ENCODE measurements at regions of chr1 and their contacts with region 1.

Region 1: DNA sequence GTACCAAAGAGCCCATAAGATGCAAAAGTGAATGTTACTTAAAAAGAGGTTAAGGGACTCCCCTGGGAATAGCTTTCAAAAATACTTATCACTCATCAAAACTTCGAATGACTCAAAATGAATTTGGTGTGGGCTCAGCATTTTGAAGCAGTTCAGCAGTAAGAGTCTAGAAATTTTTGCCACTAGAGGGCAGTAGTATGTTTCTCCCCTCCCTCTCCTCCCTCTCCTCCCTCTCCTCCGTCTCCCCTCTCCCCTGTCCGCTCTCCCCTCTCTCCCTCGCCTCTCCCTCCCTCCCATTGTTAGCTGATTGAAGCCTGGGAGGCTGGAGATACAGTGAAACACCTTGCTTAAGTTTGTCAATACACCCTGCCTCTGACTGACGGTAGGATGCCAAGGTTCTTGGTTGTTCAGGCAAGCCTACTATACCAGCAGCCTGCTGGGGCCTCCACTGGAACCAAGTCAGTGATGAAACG is 70.8 kb upstream of the TENT5C start:
- DNase-seq: peak; percentile 25
- H3K4me3 Mint-ChIP-seq: no peak overlapping the region
- H3K27ac Mint-ChIP-seq: no peak overlapping the region
- H3K4me1 Mint-ChIP-seq: peaks cover 12% of the 10 kb centered on the region
- H3K27me3 Mint-ChIP-seq: no peaks in the 10 kb centered on the region

Region 2: DNA sequence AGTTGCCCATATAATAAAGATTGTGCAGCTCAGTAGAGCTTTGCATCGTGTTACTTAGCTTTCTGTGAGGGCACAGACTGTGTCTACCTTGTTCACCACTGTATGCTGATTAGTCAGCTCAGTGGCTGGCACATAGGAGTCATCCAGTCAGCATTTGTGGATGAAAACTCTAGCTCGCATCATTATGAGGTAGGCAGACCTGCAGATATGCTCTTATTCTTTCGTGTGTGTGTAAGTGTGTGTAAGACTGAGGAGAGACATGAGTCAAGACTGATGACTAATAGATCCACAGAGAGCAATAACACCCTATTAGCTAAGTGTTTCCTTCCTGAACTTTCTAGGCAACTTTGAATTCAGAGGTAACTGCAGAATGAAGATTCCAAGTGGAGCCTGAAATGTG is 457.8 kb before region 1 on chr1:
- intact Hi-C with region 1: loop called (anchors 10 kb)
- DNase-seq: no peak
- H3K4me3 Mint-ChIP-seq: no peak overlapping the region
- H3K27ac Mint-ChIP-seq: peak overlapping the region; percentile 70
- H3K4me1 Mint-ChIP-seq: peaks cover 19% of the 10 kb centered on the region
- H3K27me3 Mint-ChIP-seq: no peaks in the 10 kb centered on the region

Region 3: DNA sequence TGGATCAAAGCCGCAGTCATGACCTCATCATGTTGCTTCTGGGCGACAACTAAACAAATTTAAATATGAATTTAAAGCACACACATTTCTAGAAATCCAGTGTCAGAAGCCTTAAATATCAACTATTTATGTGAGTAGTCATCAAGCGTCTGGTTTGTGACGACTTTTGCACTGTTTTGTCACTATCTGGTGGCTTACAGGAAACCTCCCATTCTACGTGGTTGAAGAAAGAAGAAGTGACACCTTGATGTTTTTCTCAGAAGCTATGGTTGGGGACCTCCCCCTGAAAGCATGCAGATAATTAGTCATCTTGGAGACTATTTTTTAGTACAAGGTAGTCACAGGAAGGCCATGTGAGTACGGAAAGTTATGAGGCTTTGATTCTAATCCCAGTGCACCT is 129.3 kb after region 1 on chr1:
- intact Hi-C with region 1: loop called (anchors 1 kb)
- DNase-seq: peak; percentile 67
- H3K4me3 Mint-ChIP-seq: no peak overlapping the region
- H3K27ac Mint-ChIP-seq: peak overlapping the region; percentile 83
- H3K4me1 Mint-ChIP-seq: peaks cover 67% of the 10 kb centered on the region
- H3K27me3 Mint-ChIP-seq: no peaks in the 10 kb centered on the region

Region 4: GRCh38 chr1:117674521-117675397 is 139.7 kb after region 1 on chr1:
- intact Hi-C with region 1: loop called (anchors 1 kb)
- DNase-seq: peak; percentile 35
- H3K4me3 Mint-ChIP-seq: no peak overlapping the region
- H3K27ac Mint-ChIP-seq: no peak overlapping the region
- H3K4me1 Mint-ChIP-seq: peaks cover 25% of the 10 kb centered on the region
- H3K27me3 Mint-ChIP-seq: peaks cover 10% of the 10 kb centered on the region

Region 5: GRCh38 chr1:117758444-117759316 is 223.6 kb after region 1 on chr1:
- intact Hi-C with region 1: loop called (anchors 2 kb)
- DNase-seq: peak; percentile 60
- H3K4me3 Mint-ChIP-seq: peak overlapping the region; percentile 75
- H3K27ac Mint-ChIP-seq: no peak overlapping the region
- H3K4me1 Mint-ChIP-seq: peaks cover 10% of the 10 kb centered on the region
- H3K27me3 Mint-ChIP-seq: peaks cover 37% of the 10 kb centered on the region

Region 6: DNA sequence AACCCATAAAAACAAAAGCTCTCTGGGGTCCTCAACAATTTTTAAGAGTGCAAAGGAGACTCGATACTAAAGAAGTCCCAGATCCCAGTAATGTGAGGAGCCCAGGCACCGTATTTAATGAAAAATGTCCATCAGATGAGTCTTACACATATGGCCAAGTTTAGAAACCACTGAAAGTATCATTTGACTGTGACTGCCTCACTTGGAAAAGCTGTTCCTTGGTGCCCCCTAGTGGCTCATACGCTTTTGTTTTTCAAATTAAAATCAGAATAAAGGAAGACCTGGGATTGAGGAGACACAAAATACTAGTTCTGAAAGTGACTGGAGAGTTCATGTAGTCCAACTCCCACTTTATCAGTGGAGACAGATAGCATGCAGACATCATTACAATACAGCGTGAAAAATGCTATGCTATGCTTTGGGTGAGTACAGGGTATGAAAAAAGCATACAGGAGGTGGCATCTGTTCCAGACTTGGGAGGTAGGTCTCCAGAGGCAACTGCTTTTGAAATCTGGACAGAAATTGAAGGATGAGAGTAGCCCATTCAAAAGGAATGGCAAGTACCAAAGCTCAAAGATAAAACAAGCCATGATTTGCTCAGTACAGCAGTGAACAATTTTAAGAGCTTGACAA is 360.6 kb after region 1 on chr1:
- intact Hi-C with region 1: loop called (anchors 5 kb)
- DNase-seq: peak; percentile 27
- H3K4me3 Mint-ChIP-seq: no peak overlapping the region
- H3K27ac Mint-ChIP-seq: no peak overlapping the region
- H3K4me1 Mint-ChIP-seq: no peaks in the 10 kb centered on the region
- H3K27me3 Mint-ChIP-seq: no peaks in the 10 kb centered on the region

Measured in activated T-helper 2 cell treated with anti-CD3 and anti-CD28 coated beads, Interferon-gamma antibody, Interleukin-2, Interleukin-4, amounts not matched to agents 10 μg/mL and 5 μg/mL and 100 μg/mL, durations not matched to agents 14 hours and 24 hours and 36 hours (primary cell).